ENCODE measurements at regions of chr19 and their contacts with region 1.

Region 1: DNA sequence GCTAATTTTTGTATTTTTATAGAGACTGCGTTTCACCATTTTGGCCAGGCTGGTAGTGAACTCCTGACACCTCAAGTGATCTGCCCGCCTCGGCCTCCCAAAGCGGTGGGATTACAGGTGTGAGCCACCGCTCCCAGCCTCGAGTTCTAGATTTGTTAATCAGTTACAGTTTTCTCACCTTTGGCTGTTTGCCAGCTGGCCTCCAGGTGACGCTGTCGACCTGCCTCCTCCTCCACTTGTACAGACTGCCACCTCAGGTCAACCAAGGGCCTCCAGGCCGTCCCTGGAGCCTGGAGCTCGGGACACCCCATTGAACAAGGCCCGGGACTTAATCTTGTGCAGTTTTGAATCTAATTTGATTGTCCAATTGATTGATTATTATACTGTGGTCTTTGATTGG is 45.5 kb downstream of the IER2 start:
- DNase-seq: peak; percentile 77
- ATAC-seq: peak; percentile 67
- H3K4me3 ChIP-seq: no peak overlapping the region
- H3K4me3 Mint-ChIP-seq: no peak overlapping the region
- H3K27ac ChIP-seq: no peak overlapping the region
- H3K27ac Mint-ChIP-seq: peak overlapping the region; percentile 67
- H3K4me1 ChIP-seq: peaks cover 26 to 35% of the 10 kb centered on the region in 2 donors
- H3K4me1 Mint-ChIP-seq: peaks cover 21% of the 10 kb centered on the region
- H3K27me3 ChIP-seq: no peaks in the 10 kb centered on the region
- H3K27me3 Mint-ChIP-seq: no peaks in the 10 kb centered on the region
- CTCF ChIP-seq: peak; percentile 82

Region 2: GRCh38 chr19:12899891-12900518 is 295.7 kb before region 1 on chr19:
- CTCF ChIA-PET with region 1: no interaction called
- POLR2A ChIA-PET with region 1: no interaction called
- intact Hi-C with region 1: no loop called
- DNase-seq: no peak
- ATAC-seq: no peak
- H3K4me3 ChIP-seq: no peak overlapping the region
- H3K4me3 Mint-ChIP-seq: no peak overlapping the region
- H3K27ac ChIP-seq: no peak overlapping the region
- H3K27ac Mint-ChIP-seq: no peak overlapping the region
- H3K4me1 ChIP-seq: no peaks in the 10 kb centered on the region
- H3K4me1 Mint-ChIP-seq: no peaks in the 10 kb centered on the region
- H3K27me3 ChIP-seq: no peaks in the 10 kb centered on the region
- H3K27me3 Mint-ChIP-seq: no peaks in the 10 kb centered on the region
- CTCF ChIP-seq: no peak

Region 3: GRCh38 chr19:12974301-12975220 is 221.1 kb before region 1 on chr19:
- CTCF ChIA-PET with region 1: interaction called, 16 read pairs
- POLR2A ChIA-PET with region 1: interaction called, 4 read pairs
- intact Hi-C with region 1: loop called (anchors 10 kb)
- DNase-seq: no peak
- ATAC-seq: no peak
- H3K4me3 ChIP-seq: no peak overlapping the region
- H3K4me3 Mint-ChIP-seq: no peak overlapping the region
- H3K27ac ChIP-seq: no peak overlapping the region
- H3K27ac Mint-ChIP-seq: no peak overlapping the region
- H3K4me1 ChIP-seq: peaks cover 0 to 5% of the 10 kb centered on the region in 2 donors
- H3K4me1 Mint-ChIP-seq: peaks cover 6% of the 10 kb centered on the region
- H3K27me3 ChIP-seq: peaks cover 0 to 14% (median 1%) of the 10 kb centered on the region in 4 experiments
- H3K27me3 Mint-ChIP-seq: peaks cover 12% of the 10 kb centered on the region
- CTCF ChIP-seq: no peak

Region 4: DNA sequence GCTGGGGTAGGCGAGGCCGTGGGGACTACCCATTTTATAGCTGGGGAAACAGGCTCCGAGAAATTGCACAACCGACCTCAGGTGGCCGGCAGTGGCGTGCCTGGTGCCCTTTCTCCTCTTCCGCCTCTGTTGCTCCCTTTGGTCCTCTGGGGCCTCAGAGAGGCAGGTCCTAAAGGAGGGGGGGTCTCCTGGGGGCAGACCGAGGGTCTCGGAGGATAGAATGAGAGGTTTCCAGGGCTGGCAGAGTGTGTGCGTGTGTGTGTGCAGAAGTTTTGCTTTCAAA is 56.8 kb before region 1 on chr19:
- CTCF ChIA-PET with region 1: no interaction called
- POLR2A ChIA-PET with region 1: no interaction called
- intact Hi-C with region 1: no loop called
- DNase-seq: no peak
- ATAC-seq: no peak
- H3K4me3 ChIP-seq: no peak overlapping the region
- H3K4me3 Mint-ChIP-seq: no peak overlapping the region
- H3K27ac ChIP-seq: no peak overlapping the region
- H3K27ac Mint-ChIP-seq: no peak overlapping the region
- H3K4me1 ChIP-seq: no peaks in the 10 kb centered on the region
- H3K4me1 Mint-ChIP-seq: no peaks in the 10 kb centered on the region
- H3K27me3 ChIP-seq: no peaks in the 10 kb centered on the region
- H3K27me3 Mint-ChIP-seq: no peaks in the 10 kb centered on the region
- CTCF ChIP-seq: no peak

Region 5: GRCh38 chr19:13155472-13156359 is 40.0 kb before region 1 on chr19:
- CTCF ChIA-PET with region 1: interaction called, 154 read pairs
- POLR2A ChIA-PET with region 1: interaction called, 50 read pairs
- intact Hi-C with region 1: loop called (anchors 1 kb)
- DNase-seq: peak; percentile 98
- ATAC-seq: peak; percentile 53
- H3K4me3 ChIP-seq: peak overlapping the region; percentile 82 to 100 (median 98)
- H3K4me3 Mint-ChIP-seq: peak overlapping the region; percentile 92
- H3K27ac ChIP-seq: peak overlapping the region; percentile 94 to 96
- H3K27ac Mint-ChIP-seq: peak overlapping the region; percentile 100
- H3K4me1 ChIP-seq: peaks cover 44 to 62% of the 10 kb centered on the region in 2 donors
- H3K4me1 Mint-ChIP-seq: peaks cover 42% of the 10 kb centered on the region
- H3K27me3 ChIP-seq: no peaks in the 10 kb centered on the region
- H3K27me3 Mint-ChIP-seq: no peaks in the 10 kb centered on the region
- CTCF ChIP-seq: no peak

Region 6: GRCh38 chr19:13181747-13182388 is 13.8 kb before region 1 on chr19:
- CTCF ChIA-PET with region 1: interaction called, 50 read pairs
- POLR2A ChIA-PET with region 1: interaction called, 9 read pairs
- intact Hi-C with region 1: no loop called
- DNase-seq: peak; percentile 49
- ATAC-seq: peak; percentile 58
- H3K4me3 ChIP-seq: no peak overlapping the region
- H3K4me3 Mint-ChIP-seq: peak overlapping the region; percentile 62
- H3K27ac ChIP-seq: no peak overlapping the region
- H3K27ac Mint-ChIP-seq: peak overlapping the region; percentile 84
- H3K4me1 ChIP-seq: peaks cover 27 to 37% of the 10 kb centered on the region in 2 donors
- H3K4me1 Mint-ChIP-seq: peaks cover 29% of the 10 kb centered on the region
- H3K27me3 ChIP-seq: no peaks in the 10 kb centered on the region
- H3K27me3 Mint-ChIP-seq: no peaks in the 10 kb centered on the region
- CTCF ChIP-seq: no peak

Region 7: DNA sequence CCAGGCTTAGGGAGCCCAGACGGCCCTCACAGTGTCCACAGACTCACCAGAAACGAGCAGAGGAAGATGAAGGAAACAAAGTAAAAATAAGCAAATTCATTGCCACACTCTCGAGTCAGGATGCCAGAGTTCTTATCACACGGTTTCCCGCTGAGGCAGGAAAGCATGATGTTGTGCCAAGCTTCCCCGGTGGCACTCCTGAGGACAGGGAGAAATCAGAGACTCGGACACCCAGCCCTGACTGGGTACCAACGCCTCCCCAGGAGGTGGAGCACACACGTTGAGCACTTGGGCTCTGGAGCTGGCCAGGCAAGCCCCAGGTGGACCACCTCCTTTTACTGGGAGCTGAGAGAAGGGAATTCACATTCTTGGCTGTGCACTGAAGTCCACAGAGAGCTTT is 36.0 kb after region 1 on chr19:
- CTCF ChIA-PET with region 1: interaction called, 26 read pairs
- POLR2A ChIA-PET with region 1: interaction called, 5 read pairs
- intact Hi-C with region 1: no loop called
- DNase-seq: no peak
- ATAC-seq: no peak
- H3K4me3 ChIP-seq: no peak overlapping the region
- H3K4me3 Mint-ChIP-seq: no peak overlapping the region
- H3K27ac ChIP-seq: no peak overlapping the region
- H3K27ac Mint-ChIP-seq: no peak overlapping the region
- H3K4me1 ChIP-seq: peaks cover 10 to 12% of the 10 kb centered on the region in 2 donors
- H3K4me1 Mint-ChIP-seq: peaks cover 7% of the 10 kb centered on the region
- H3K27me3 ChIP-seq: peaks cover 0 to 7% (median 1%) of the 10 kb centered on the region in 4 experiments
- H3K27me3 Mint-ChIP-seq: peaks cover 14% of the 10 kb centered on the region
- CTCF ChIP-seq: no peak

Region 8: GRCh38 chr19:13270514-13271105 is 74.9 kb after region 1 on chr19:
- CTCF ChIA-PET with region 1: interaction called, 95 read pairs
- POLR2A ChIA-PET with region 1: no interaction called
- intact Hi-C with region 1: no loop called
- DNase-seq: no peak
- ATAC-seq: no peak
- H3K4me3 ChIP-seq: no peak overlapping the region
- H3K4me3 Mint-ChIP-seq: no peak overlapping the region
- H3K27ac ChIP-seq: no peak overlapping the region
- H3K27ac Mint-ChIP-seq: no peak overlapping the region
- H3K4me1 ChIP-seq: no peaks in the 10 kb centered on the region
- H3K4me1 Mint-ChIP-seq: no peaks in the 10 kb centered on the region
- H3K27me3 ChIP-seq: no peaks in the 10 kb centered on the region
- H3K27me3 Mint-ChIP-seq: no peaks in the 10 kb centered on the region
- CTCF ChIP-seq: no peak

Region 9: GRCh38 chr19:13463296-13463695 is 267.6 kb after region 1 on chr19:
- CTCF ChIA-PET with region 1: no interaction called
- POLR2A ChIA-PET with region 1: no interaction called
- intact Hi-C with region 1: no loop called
- DNase-seq: no peak
- ATAC-seq: no peak
- H3K4me3 ChIP-seq: no peak overlapping the region
- H3K4me3 Mint-ChIP-seq: no peak overlapping the region
- H3K27ac ChIP-seq: no peak overlapping the region
- H3K27ac Mint-ChIP-seq: no peak overlapping the region
- H3K4me1 ChIP-seq: no peaks in the 10 kb centered on the region
- H3K4me1 Mint-ChIP-seq: no peaks in the 10 kb centered on the region
- H3K27me3 ChIP-seq: no peaks in the 10 kb centered on the region
- H3K27me3 Mint-ChIP-seq: peaks cover 25% of the 10 kb centered on the region
- CTCF ChIP-seq: no peak